H1 (cell line): ENCODE measurements at regions of chr13 and their contacts with region 1.

Region 1: GRCh38 chr13:76955193-76955592 is 6.9 kb downstream of the ACOD1 start:
- DNase-seq: no peak
- H3K4me3 ChIP-seq: no peak overlapping the region
- H3K27ac ChIP-seq: no peak overlapping the region
- H3K4me1 ChIP-seq: no peaks in the 10 kb centered on the region
- H3K27me3 ChIP-seq: peaks cover 0 to 1% (median 0%) of the 10 kb centered on the region in 4 experiments; a peak in 1 of 7 replicates
- CTCF ChIP-seq: no peak
- EP300 ChIP-seq: no peak
- POLR2A ChIP-seq: no peak
- RAD21 ChIP-seq: no peak

Region 2: GRCh38 chr13:76812206-76812897 is 142.8 kb before region 1 on chr13:
- CTCF ChIA-PET with region 1: no interaction called
- POLR2A ChIA-PET with region 1: no interaction called
- DNase-seq: no peak
- H3K4me3 ChIP-seq: no peak overlapping the region
- H3K27ac ChIP-seq: no peak overlapping the region
- H3K4me1 ChIP-seq: no peaks in the 10 kb centered on the region
- H3K27me3 ChIP-seq: peaks cover 0 to 1% (median 0%) of the 10 kb centered on the region in 4 experiments; a peak in 1 of 7 replicates
- CTCF ChIP-seq: no peak
- EP300 ChIP-seq: no peak
- POLR2A ChIP-seq: no peak
- RAD21 ChIP-seq: no peak

Region 3: GRCh38 chr13:76942363-76942762 is 12.8 kb before region 1 on chr13:
- CTCF ChIA-PET with region 1: interaction called, 11 read pairs
- POLR2A ChIA-PET with region 1: no interaction called
- DNase-seq: no peak
- H3K4me3 ChIP-seq: no peak overlapping the region
- H3K27ac ChIP-seq: no peak overlapping the region
- H3K4me1 ChIP-seq: no peaks in the 10 kb centered on the region
- H3K27me3 ChIP-seq: no peaks in the 10 kb centered on the region
- CTCF ChIP-seq: no peak
- EP300 ChIP-seq: no peak
- POLR2A ChIP-seq: no peak
- RAD21 ChIP-seq: no peak

Region 4: GRCh38 chr13:76965759-76966421 is 10.7 kb after region 1 on chr13:
- CTCF ChIA-PET with region 1: interaction called, 12 read pairs
- POLR2A ChIA-PET with region 1: no interaction called
- DNase-seq: no peak
- H3K4me3 ChIP-seq: no peak overlapping the region
- H3K27ac ChIP-seq: no peak overlapping the region
- H3K4me1 ChIP-seq: no peaks in the 10 kb centered on the region; a peak in 1 of 7 replicates
- H3K27me3 ChIP-seq: no peaks in the 10 kb centered on the region
- CTCF ChIP-seq: no peak
- EP300 ChIP-seq: no peak
- POLR2A ChIP-seq: no peak
- RAD21 ChIP-seq: no peak

Region 5: DNA sequence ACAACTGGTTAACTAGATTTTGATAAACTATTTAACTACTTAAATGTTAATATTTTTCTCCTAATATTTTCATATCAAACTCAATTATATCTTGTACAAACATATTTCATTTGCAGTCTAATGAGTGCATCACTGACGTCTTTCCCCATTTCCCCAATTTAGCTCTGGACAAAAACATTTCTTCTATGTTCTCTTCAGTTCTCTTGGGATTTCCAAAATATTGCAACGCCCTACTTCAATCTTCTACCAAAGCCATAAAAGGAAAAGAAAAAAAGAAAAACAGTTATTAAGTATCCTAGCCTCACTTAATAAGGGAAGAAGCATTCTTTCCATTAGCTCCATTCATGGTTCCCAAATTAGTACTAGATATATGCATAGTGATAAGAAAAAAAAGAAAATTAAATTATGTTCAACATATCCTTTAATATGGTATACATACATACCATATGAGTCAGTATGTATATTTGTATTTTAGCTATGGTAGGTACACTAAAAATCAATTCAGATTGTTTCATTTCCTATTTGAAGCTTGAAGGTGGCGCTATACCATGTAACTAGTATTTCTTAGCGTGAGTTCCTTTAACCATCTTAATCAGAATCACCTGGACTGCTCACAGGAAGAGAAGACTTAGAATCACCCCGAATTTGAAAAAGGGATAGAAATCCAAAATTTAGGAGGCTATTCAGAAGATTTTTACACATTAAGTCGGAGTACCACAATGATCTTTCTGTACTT is 61.9 kb after region 1 on chr13:
- CTCF ChIA-PET with region 1: no interaction called
- POLR2A ChIA-PET with region 1: no interaction called
- DNase-seq: no peak
- H3K4me3 ChIP-seq: no peak overlapping the region
- H3K27ac ChIP-seq: no peak overlapping the region
- H3K4me1 ChIP-seq: no peaks in the 10 kb centered on the region
- H3K27me3 ChIP-seq: no peaks in the 10 kb centered on the region
- CTCF ChIP-seq: peak in 1 of 3 experiments; percentile 24; a peak in 2 of 4 replicates
- EP300 ChIP-seq: no peak
- POLR2A ChIP-seq: no peak
- RAD21 ChIP-seq: peak; percentile 16 to 23; a peak in 2 of 4 replicates